Ascending aorta (tissue), 2 donors: ENCODE measurements at regions of chr1 and their contacts with region 1.

Region 1: DNA sequence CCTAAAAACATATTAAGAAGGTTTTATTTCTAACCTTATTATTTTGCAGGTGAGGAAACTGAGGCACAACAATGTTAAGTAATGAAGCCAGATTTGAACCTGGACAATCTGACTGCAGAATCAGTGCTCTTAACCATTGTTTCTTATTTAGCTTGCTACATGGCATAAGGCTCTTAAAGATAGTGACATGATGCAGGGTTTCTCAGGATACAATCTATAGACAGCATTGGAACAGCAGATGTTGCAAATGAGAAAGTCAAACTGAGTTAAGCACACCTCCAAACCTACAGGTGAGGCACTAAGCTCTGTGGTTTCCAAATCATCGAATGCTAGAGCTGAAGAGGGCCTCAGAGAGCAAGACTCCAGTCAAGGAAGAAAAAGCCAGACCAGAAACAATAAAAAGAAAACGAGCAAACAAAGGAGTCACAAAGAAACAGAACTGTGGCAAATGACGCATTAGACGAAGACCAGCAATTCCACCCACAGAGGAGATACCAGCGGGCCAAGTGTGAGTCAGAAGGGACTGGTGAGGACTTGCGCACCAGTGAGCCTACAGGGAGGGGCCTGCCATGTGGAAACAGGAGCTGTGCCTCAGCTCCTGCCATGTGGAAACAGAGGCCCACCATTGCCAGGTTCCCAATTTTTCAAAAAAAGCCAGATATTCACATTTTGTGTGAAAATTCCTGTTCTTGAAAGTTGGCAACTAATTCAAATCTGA is 14.4 kb downstream of the CD58 start:
- DNase-seq: peak; percentile 64 to 87
- H3K4me3 ChIP-seq: no peak overlapping the region
- H3K27ac ChIP-seq: peak overlapping the region; percentile 35 to 44
- H3K4me1 ChIP-seq: no peaks in the 10 kb centered on the region
- H3K27me3 ChIP-seq: no peaks in the 10 kb centered on the region
- CTCF ChIP-seq: no peak

Region 2: GRCh38 chr1:116377541-116378529 is 178.6 kb before region 1 on chr1:
- intact Hi-C with region 1: loop called (anchors 5 kb)
- DNase-seq: peak in 1 of 2 donors; percentile 75
- H3K4me3 ChIP-seq: peak overlapping the region; percentile 78 to 81
- H3K27ac ChIP-seq: peak overlapping the region; percentile 95 to 96
- H3K4me1 ChIP-seq: peaks cover 27 to 71% of the 10 kb centered on the region in 2 donors
- H3K27me3 ChIP-seq: no peaks in the 10 kb centered on the region
- CTCF ChIP-seq: no peak

Region 3: GRCh38 chr1:116521186-116521585 is 35.3 kb before region 1 on chr1:
- intact Hi-C with region 1: loop called (anchors 5 kb)
- DNase-seq: no peak
- H3K4me3 ChIP-seq: no peak overlapping the region
- H3K27ac ChIP-seq: peak overlapping the region; percentile 21 to 55
- H3K4me1 ChIP-seq: peaks cover 0 to 6% of the 10 kb centered on the region in 2 donors
- H3K27me3 ChIP-seq: no peaks in the 10 kb centered on the region
- CTCF ChIP-seq: no peak

Region 4: DNA sequence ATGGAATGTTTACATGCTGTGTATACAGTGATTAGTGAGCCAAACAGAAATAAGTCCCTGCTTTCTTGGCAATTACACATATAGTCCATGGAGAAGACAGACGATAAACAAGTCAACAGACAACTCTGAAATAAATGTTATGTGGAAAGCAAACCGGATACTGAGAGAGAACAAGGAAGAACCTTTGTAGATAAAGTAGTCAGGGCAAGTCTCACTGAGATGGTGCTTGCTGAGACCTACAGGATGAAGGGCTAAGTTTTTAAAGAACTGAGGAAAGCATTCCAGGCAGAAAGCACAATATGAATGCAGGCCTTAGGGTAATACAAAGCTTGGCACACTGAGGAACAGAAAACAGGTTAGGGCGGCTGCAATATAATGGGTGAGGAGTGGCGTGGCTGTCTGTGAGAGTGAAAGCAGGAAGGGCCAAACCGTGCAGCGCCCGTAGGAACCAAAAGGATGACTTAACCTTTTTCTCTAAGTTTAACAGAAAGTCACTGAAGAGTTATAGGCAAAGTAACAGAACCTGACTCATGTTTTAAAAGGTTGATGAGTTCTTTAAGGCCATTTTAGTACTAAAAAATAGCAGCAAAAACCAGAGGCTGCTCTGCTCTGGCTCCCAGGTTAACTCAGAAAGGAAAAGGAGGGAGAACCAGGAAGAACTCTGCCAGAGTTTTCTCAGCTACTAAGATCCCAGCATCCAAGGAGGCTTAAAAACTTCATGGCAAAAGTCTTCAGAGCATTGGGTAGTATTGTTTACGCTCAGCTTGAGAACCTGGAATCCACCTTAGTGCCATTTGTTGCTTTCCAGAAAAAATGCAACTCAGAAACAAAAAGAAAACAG is 495.0 kb after region 1 on chr1:
- intact Hi-C with region 1: no loop called
- DNase-seq: no peak
- H3K4me3 ChIP-seq: peak overlapping the region; percentile 15 to 35
- H3K27ac ChIP-seq: peak overlapping the region in 1 of 2 donors; percentile 41
- H3K4me1 ChIP-seq: no peaks in the 10 kb centered on the region
- H3K27me3 ChIP-seq: no peaks in the 10 kb centered on the region
- CTCF ChIP-seq: no peak